Mammary epithelial cell (primary cell): ENCODE measurements at regions of chr11 and their contacts with region 1.

Region 1: GRCh38 chr11:66883016-66883968 is 26.4 kb downstream of the LRFN4 start:
- DNase-seq: peak; percentile 60
- H3K4me3 ChIP-seq: no peak overlapping the region
- H3K27ac ChIP-seq: no peak overlapping the region
- H3K4me1 ChIP-seq: peaks cover 38% of the 10 kb centered on the region
- H3K27me3 ChIP-seq: no peaks in the 10 kb centered on the region
- CTCF ChIP-seq: peak; percentile 62 to 76

Region 2: DNA sequence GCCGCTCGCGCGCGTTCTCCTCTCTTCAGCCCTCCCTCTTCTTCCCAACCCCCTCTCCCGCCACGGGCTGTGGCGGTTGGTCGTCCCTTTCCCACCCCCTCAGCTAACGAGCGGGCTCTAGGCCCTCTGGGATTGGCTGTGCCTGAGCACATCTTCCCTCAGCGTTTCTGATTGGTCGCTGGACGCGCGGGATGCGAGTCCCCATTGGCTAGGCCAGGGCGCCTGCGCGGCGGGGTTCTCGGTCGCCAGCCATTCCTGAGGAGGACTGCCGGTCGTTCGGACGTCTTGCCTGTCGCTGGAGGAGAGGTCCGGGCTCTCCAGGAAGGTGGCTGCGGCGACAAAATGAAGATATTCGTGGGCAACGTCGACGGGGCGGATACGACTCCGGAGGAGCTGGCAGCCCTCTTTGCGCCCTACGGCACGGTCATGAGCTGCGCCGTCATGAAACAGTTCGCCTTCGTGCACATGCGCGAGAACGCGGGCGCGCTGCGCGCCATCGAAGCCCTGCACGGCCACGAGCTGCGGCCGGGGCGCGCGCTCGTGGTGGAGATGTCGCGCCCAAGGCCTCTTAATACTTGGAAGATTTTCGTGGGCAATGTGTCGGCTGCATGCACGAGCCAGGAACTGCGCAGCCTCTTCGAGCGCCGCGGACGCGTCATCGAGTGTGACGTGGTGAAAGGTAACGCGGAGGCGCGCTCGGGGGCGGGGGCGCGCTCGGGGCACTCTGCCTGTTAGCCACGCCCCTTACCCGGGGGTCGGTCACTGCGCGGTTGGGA is 266.7 kb before region 1 on chr11 and contains the start of gene RBM14:
- CTCF ChIA-PET with region 1: no interaction called
- dilution Hi-C with region 1: no loop called
- in situ Hi-C with region 1: no loop called
- intact Hi-C with region 1: no loop called
- DNase-seq: peak; percentile 99
- H3K4me3 ChIP-seq: peak within 1 kb of the TSS; percentile 80 to 92 (median 88)
- H3K27ac ChIP-seq: peak within 1 kb of the TSS; percentile 93
- H3K4me1 ChIP-seq: peaks cover 14% of the 10 kb centered on the region
- H3K27me3 ChIP-seq: no peaks in the 10 kb centered on the region
- CTCF ChIP-seq: no peak
- total RNA-seq, gene RBM14: 20.0 to 79.3 TPM

Region 3: DNA sequence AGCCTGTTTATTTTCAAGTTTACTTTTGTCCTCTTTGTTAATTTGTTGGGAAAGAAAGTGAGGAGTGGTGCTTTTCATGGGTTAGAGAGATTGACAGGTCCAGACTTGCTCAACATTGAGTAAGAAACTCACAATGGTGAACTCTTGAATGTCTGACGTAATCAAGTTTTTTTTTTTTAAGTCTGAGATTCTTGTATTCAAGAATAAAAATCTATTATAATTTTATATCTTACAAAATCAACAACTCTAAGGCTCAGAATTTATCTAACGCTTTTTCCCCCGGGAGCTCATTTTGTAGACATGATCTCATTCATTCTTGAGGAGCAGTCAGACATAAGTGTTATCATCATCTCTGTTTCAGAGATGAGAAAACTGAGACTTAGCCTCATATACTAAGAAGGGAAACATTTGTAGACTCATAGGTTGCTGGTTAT is 115.2 kb before region 1 on chr11:
- CTCF ChIA-PET with region 1: no interaction called
- dilution Hi-C with region 1: no loop called
- in situ Hi-C with region 1: no loop called
- intact Hi-C with region 1: no loop called
- DNase-seq: peak; percentile 83
- H3K4me3 ChIP-seq: no peak overlapping the region
- H3K27ac ChIP-seq: peak overlapping the region; percentile 60
- H3K4me1 ChIP-seq: peaks cover 20% of the 10 kb centered on the region
- H3K27me3 ChIP-seq: no peaks in the 10 kb centered on the region
- CTCF ChIP-seq: no peak

Region 4: GRCh38 chr11:66855574-66856495 is 27.5 kb before region 1 on chr11:
- CTCF ChIA-PET with region 1: no interaction called
- dilution Hi-C with region 1: no loop called
- in situ Hi-C with region 1: no loop called
- intact Hi-C with region 1: loop called (anchors 2 kb)
- DNase-seq: peak; percentile 82
- H3K4me3 ChIP-seq: peak overlapping the region; percentile 48 to 78 (median 62)
- H3K27ac ChIP-seq: peak overlapping the region; percentile 35
- H3K4me1 ChIP-seq: peaks cover 19% of the 10 kb centered on the region
- H3K27me3 ChIP-seq: no peaks in the 10 kb centered on the region
- CTCF ChIP-seq: no peak

Region 5: DNA sequence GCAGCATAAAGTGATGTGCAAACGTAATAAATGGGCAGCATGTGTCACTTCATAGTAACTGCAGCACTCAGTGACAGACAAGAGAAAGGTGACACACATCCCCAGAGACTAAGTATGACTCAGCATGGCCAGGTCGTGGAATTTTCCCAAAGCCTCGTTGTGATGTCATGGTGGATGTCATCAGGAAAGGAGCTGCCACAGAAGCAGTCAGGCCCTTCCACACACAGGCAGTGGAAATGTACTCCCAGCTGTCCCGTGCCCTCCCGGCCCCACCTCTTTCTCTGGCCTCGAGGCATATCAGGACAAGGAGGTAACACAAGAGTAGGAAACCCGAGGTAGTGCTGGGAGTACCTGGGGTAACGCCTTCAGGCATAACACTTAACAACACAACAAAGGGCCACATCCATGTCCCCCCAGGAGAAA is 66.8 kb after region 1 on chr11:
- CTCF ChIA-PET with region 1: no interaction called
- dilution Hi-C with region 1: loop called (anchors 5 kb)
- in situ Hi-C with region 1: no loop called
- intact Hi-C with region 1: no loop called
- DNase-seq: peak; percentile 81
- H3K4me3 ChIP-seq: no peak overlapping the region
- H3K27ac ChIP-seq: peak overlapping the region; percentile 25
- H3K4me1 ChIP-seq: peaks cover 11% of the 10 kb centered on the region
- H3K27me3 ChIP-seq: no peaks in the 10 kb centered on the region
- CTCF ChIP-seq: no peak